Natural killer cell (primary cell): ENCODE measurements at regions of chr22 and their contacts with region 1.

Region 1: DNA sequence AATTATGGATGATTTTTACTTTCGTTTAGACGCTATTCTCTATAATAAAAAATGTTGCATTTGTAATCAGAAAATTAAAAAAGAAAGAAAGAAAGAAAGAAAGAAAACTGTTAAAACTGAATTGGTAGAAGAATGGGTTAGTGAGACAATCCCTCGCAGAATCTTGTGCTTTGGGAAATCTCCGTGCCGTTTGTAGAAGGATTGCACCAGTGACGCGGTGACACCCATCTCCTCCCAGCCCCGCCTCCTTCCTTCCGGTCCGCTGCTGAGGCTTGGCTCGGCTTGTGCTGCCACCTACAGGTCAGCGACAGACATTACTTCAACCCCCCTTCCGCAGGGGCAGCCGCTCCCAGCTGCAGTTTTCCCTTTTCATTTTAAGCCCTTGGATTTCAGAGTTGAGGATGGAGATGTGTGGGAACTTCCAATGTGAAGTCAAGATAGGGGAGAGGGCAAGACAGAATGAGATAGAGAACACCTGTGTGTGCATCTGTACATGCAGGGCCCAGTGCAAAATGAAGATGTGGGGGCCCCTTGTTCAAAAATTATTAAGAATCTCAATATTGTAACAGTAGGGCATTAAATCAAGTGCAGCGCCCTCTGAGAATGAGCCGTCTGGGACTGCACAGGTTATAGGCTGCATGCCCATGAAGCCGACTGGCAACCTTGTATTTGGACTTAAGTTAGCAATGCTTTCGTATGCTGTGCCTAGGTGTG is 41.1 kb downstream of the TST start:
- DNase-seq: peak; percentile 86 to 96
- ATAC-seq: peak; percentile 96 to 98 (median 98)
- H3K4me3 ChIP-seq: peak overlapping the region; percentile 65
- H3K4me3 Mint-ChIP-seq: peak overlapping the region; percentile 99
- H3K27ac ChIP-seq: peak overlapping the region; percentile 61
- H3K27ac Mint-ChIP-seq: peak overlapping the region; percentile 89 to 95
- H3K4me1 ChIP-seq: peaks cover 11% of the 10 kb centered on the region
- H3K4me1 Mint-ChIP-seq: peaks cover 13 to 14% of the 10 kb centered on the region in 2 donors
- H3K27me3 ChIP-seq: no peaks in the 10 kb centered on the region
- H3K27me3 Mint-ChIP-seq: peaks cover 9 to 10% of the 10 kb centered on the region in 2 donors
- CTCF ChIP-seq: peak; percentile 86

Region 2: DNA sequence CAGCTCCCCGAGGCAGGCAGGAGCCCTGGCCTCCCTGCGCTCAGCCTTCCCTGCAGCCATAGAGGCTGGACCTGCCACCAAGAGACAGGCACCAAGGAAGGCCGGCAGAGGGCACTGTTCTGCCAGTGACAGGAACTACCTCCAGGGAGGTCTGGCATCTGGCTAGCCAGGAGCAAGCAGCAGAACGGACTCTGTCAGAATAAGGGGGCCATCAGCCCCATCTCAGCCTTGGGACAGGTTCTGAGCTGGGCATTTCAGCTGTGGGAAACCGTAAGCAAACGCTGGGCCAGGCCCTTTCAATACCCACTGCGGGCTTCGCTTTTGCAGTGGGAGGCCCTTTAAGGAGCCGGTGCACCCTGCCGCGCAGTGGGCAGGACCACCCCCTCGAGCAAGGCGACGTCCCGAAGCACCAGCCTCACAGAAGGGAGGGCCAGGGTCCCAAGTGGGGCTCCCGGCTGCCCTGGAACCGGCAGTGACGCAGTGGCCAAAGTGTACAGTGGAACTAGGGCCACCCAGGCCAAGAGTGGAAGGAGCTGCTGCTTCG is 220.4 kb before region 1 on chr22:
- intact Hi-C with region 1: loop called (anchors 1 kb)
- DNase-seq: peak; percentile 67 to 80
- ATAC-seq: peak; percentile 82 to 96 (median 91)
- H3K4me3 ChIP-seq: no peak overlapping the region
- H3K4me3 Mint-ChIP-seq: no peak overlapping the region
- H3K27ac ChIP-seq: no peak overlapping the region
- H3K27ac Mint-ChIP-seq: no peak overlapping the region
- H3K4me1 ChIP-seq: no peaks in the 10 kb centered on the region
- H3K4me1 Mint-ChIP-seq: peaks cover 5 to 7% of the 10 kb centered on the region in 2 donors
- H3K27me3 ChIP-seq: peaks cover 3% of the 10 kb centered on the region
- H3K27me3 Mint-ChIP-seq: peaks cover 9 to 14% of the 10 kb centered on the region in 2 donors
- CTCF ChIP-seq: peak; percentile 74

Region 3: DNA sequence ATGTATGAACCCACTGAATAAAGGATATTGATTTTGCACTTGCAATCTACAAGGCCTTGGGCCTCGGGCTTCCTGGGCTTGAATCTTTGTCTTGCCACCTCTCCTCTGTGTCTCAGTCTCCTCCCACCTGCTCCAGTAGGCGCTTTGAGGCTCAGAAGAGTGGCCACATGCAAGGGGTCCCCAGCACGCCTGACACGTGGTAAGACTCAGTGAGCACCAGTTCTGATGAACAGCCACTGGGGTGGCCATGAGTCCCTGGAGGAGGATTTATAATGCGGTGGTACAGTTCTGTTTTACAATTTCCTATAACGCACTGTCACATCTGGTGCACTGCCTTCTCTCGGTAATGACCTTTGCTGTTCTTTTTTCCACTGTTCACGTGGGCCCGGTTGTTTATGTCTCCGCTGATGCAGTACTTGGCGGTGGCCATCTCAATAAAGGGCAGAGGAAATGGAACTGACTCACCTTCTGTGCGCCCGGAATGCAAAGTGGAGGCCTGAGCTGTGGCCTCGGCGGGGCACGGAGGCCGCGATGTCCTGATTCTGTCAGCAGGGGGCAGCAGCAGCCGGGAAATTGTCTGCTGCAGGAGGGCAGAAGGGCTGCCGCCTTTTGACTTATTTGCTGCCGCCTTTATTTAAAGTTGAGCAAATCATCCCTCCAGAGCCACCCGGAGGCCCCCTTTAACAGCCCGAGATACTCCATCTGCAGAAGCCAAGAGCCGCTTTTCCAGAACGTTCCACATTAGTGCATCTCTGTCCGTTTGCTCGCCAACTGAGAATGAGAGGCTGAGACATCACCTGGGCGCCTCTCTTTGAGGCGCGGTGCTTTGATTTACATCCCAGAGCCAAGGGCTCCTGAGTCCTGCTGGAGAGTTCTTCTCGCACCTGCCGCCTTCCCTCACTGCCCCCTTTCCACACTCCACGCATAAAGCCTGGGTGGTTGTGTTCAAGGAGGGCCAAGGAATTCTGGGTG is 196.2 kb before region 1 on chr22:
- intact Hi-C with region 1: loop called (anchors 1 kb)
- DNase-seq: peak; percentile 81 to 88
- ATAC-seq: peak; percentile 94 to 98 (median 98)
- H3K4me3 ChIP-seq: no peak overlapping the region
- H3K4me3 Mint-ChIP-seq: no peak overlapping the region
- H3K27ac ChIP-seq: no peak overlapping the region
- H3K27ac Mint-ChIP-seq: peak overlapping the region in 1 of 2 donors; percentile 65
- H3K4me1 ChIP-seq: peaks cover 11% of the 10 kb centered on the region
- H3K4me1 Mint-ChIP-seq: peaks cover 7 to 15% of the 10 kb centered on the region in 2 donors
- H3K27me3 ChIP-seq: no peaks in the 10 kb centered on the region
- H3K27me3 Mint-ChIP-seq: peaks cover 11 to 22% of the 10 kb centered on the region in 2 donors
- CTCF ChIP-seq: peak; percentile 93

Region 4: GRCh38 chr22:36856121-36856791 is 121.8 kb before region 1 on chr22:
- intact Hi-C with region 1: loop called (anchors 1 kb)
- DNase-seq: peak; percentile 96 to 97
- ATAC-seq: peak; percentile 84 to 93 (median 88)
- H3K4me3 ChIP-seq: no peak overlapping the region
- H3K4me3 Mint-ChIP-seq: peak overlapping the region; percentile 40
- H3K27ac ChIP-seq: no peak overlapping the region
- H3K27ac Mint-ChIP-seq: peak overlapping the region; percentile 14 to 38
- H3K4me1 ChIP-seq: peaks cover 33% of the 10 kb centered on the region
- H3K4me1 Mint-ChIP-seq: peaks cover 20 to 25% of the 10 kb centered on the region in 2 donors
- H3K27me3 ChIP-seq: no peaks in the 10 kb centered on the region
- H3K27me3 Mint-ChIP-seq: peaks cover 3 to 7% of the 10 kb centered on the region in 2 donors
- CTCF ChIP-seq: peak; percentile 100